Activated B cell treated with CpG ODN at 0.5 μM for 24 hours (primary cell): ENCODE measurements at regions of chr14 and their contacts with region 1.

Region 1: DNA sequence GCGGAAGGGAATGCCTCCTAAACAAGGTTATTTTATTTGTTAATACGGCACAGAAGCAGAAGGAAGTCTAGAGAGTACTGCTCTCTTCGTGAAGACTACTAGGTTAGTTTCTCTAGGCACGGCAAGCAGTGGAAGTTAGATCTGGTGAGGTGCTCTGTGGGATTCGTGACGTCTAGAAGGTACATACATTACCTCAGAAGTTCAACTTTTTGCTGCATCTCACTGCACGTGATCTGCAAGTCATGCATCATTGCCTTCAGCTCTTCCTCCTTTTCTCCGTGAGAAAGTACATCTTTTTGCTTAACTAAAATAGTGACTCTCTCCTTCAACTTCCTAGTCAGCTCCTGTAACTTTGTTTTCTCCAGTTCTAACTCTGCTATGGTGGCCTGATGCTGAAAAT is 74.7 kb downstream of the NIN start:
- DNase-seq: peak; percentile 28
- ATAC-seq: peak; percentile 91
- H3K4me3 Mint-ChIP-seq: no peak overlapping the region
- H3K27ac Mint-ChIP-seq: no peak overlapping the region
- H3K4me1 Mint-ChIP-seq: peaks cover 6% of the 10 kb centered on the region
- H3K27me3 Mint-ChIP-seq: no peaks in the 10 kb centered on the region
- CTCF ChIP-seq: no peak

Region 2: DNA sequence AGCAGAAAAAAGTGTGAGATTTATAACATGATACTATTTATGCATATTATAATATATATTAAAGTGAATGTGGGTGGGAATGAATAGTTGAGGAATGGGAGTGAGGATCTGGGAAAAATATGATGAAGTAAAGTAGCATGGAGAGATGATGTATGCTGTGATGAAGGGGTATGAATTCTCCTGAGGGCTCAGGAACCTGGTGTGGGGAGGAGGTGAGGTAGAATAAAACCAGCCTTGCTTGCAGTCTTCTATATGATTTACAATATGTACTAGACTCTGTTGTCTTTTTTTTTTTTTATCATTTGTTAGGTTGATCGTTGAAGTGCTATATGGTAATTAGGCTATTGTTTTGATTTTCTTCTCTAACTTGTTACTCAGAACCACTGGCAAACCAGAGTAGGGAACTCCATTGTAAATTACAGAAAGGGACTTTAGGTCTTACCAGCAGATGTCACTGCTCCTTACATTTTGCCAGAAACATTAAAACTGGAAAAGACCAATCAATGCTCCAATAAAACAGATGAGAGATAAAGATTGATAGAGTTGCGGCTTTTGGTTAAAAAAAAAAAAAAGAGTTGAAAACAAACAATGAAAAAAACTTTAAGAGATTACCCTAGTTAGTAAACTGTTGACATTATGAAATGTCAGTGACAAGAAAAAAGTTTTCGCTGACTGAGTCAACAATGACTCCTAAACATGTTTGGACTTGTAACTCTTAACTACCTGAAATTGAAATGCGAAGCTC is 156.4 kb before region 1 on chr14:
- CTCF ChIA-PET with region 1: no interaction called
- POLR2A ChIA-PET with region 1: interaction called, 10 read pairs
- intact Hi-C with region 1: no loop called
- DNase-seq: no peak
- ATAC-seq: no peak
- H3K4me3 Mint-ChIP-seq: no peak overlapping the region
- H3K27ac Mint-ChIP-seq: no peak overlapping the region
- H3K4me1 Mint-ChIP-seq: no peaks in the 10 kb centered on the region
- H3K27me3 Mint-ChIP-seq: no peaks in the 10 kb centered on the region
- CTCF ChIP-seq: no peak

Region 3: DNA sequence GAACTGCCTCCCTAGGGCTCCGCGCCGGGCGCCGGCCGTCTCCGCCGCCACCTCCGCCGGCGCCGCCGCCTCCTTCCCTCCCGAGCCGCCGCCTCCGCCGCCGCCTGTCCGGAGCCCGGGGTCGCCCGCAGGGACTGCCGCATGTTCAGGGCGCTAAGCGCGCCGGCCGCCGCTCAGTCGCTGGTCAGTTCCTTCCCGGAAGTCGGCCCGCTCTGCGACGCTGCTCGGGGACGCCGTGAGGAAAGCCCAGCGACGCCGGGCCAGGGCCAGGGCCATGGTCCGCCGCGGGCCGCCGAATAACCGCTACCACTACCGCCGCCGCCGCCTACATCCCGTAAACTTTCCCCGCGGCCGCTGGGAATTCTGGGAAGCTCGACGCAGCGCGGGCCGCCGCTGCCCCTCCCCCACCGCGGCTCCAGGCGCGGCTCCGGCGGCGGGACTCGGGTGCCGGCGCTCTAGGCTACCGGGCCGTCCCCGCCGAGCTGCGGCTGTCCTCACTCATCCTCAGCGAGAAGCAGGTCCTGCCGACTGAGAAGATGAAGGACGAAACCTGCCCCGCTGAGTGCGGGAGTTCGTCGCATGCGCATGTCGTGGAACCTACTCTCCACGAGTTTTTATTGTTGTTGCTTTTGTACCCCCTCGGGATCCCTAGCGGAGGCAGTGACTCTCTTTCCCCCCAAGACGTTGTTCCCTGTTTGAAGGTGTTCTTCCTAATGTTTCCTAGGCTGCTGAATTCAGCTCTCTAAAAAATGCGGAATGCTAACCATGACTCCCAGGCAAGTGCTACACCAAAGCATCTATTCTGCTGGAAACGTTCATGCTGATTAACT is 88.1 kb before region 1 on chr14 and contains the start of gene SAV1:
- CTCF ChIA-PET with region 1: no interaction called
- POLR2A ChIA-PET with region 1: interaction called, 4 read pairs
- intact Hi-C with region 1: loop called (anchors 2 kb)
- DNase-seq: peak; percentile 63
- ATAC-seq: peak; percentile 65
- H3K4me3 Mint-ChIP-seq: no peak within 1 kb of the TSS
- H3K27ac Mint-ChIP-seq: no peak within 1 kb of the TSS
- H3K4me1 Mint-ChIP-seq: peaks cover 32% of the 10 kb centered on the region
- H3K27me3 Mint-ChIP-seq: no peaks in the 10 kb centered on the region
- CTCF ChIP-seq: no peak
- total RNA-seq, gene SAV1: 31.0 and 33.3 TPM in 2 replicates

Region 4: GRCh38 chr14:50741571-50741970 is 14.7 kb before region 1 on chr14:
- CTCF ChIA-PET with region 1: interaction called, 3 read pairs
- POLR2A ChIA-PET with region 1: interaction called, 3 read pairs
- intact Hi-C with region 1: loop called (anchors 2 kb)
- DNase-seq: no peak
- ATAC-seq: no peak
- H3K4me3 Mint-ChIP-seq: no peak overlapping the region
- H3K27ac Mint-ChIP-seq: no peak overlapping the region
- H3K4me1 Mint-ChIP-seq: peaks cover 8% of the 10 kb centered on the region
- H3K27me3 Mint-ChIP-seq: no peaks in the 10 kb centered on the region
- CTCF ChIP-seq: no peak

Region 5: DNA sequence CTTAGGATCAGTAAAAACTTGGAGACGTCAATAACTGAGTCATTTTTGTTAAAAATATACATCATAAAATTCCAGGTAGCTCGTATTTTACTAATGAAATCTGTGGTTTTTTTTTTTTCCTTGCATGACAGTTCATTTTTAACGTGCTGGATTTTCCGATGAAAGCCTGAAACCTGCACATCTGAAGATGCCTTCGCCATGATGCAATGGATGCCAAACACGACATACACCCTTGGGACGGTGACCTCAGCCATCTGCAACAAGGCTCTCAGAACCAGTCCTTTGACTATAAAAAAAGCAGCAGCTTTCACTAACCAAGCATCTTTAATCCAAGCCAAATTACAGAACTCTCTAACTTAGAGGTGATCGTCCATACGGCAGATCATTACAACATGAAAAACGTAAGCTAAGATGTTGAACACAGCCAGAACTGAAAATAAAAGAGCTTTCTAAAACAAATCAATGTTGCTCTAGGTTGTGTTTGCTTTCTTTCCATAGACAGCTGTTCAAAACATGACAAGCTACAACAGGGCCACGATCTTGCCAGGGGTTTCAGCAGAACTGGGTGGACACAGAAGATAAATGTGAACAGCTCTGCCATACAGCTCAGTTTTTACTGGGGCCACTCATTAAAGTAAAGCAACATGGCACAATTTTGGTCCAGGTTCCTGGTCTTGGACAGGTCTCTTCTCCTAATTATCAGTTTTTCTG is 66.9 kb after region 1 on chr14:
- CTCF ChIA-PET with region 1: no interaction called
- POLR2A ChIA-PET with region 1: no interaction called
- intact Hi-C with region 1: loop called (anchors 2 kb)
- DNase-seq: no peak
- ATAC-seq: peak; percentile 32
- H3K4me3 Mint-ChIP-seq: peak overlapping the region; percentile 81
- H3K27ac Mint-ChIP-seq: peak overlapping the region; percentile 97
- H3K4me1 Mint-ChIP-seq: peaks cover 95% of the 10 kb centered on the region
- H3K27me3 Mint-ChIP-seq: no peaks in the 10 kb centered on the region
- CTCF ChIP-seq: no peak